Kidney (tissue), 22 donors: ENCODE measurements at regions of chr14 and their contacts with region 1.

Region 1: GRCh38 chr14:67934008-67934481 is 114.5 kb downstream of the RAD51B start:
- DNase-seq: peak in 3 of 5 donors; percentile 20 to 94 (median 91)
- H3K4me3 ChIP-seq: no peak overlapping the region
- H3K27ac ChIP-seq: no peak overlapping the region
- H3K4me1 ChIP-seq: peaks cover 0 to 7% (median 3%) of the 10 kb centered on the region in 3 donors
- H3K27me3 ChIP-seq: no peaks in the 10 kb centered on the region
- CTCF ChIP-seq: peak; percentile 72

Region 2: GRCh38 chr14:68824517-68825347 is 890.7 kb after region 1 on chr14:
- intact Hi-C with region 1: loop called (anchors 10 kb)
- DNase-seq: peak; percentile 87 to 93 (median 91)
- H3K4me3 ChIP-seq: peak overlapping the region in 2 of 3 donors; percentile 37 to 56
- H3K27ac ChIP-seq: peak overlapping the region in 1 of 2 donors; percentile 28
- H3K4me1 ChIP-seq: peaks cover 0 to 15% (median 15%) of the 10 kb centered on the region in 3 donors
- H3K27me3 ChIP-seq: no peaks in the 10 kb centered on the region
- CTCF ChIP-seq: peak; percentile 83